Spleen (tissue), 13 donors: ENCODE measurements at regions of chr15 and their contacts with region 1.

Region 1: DNA sequence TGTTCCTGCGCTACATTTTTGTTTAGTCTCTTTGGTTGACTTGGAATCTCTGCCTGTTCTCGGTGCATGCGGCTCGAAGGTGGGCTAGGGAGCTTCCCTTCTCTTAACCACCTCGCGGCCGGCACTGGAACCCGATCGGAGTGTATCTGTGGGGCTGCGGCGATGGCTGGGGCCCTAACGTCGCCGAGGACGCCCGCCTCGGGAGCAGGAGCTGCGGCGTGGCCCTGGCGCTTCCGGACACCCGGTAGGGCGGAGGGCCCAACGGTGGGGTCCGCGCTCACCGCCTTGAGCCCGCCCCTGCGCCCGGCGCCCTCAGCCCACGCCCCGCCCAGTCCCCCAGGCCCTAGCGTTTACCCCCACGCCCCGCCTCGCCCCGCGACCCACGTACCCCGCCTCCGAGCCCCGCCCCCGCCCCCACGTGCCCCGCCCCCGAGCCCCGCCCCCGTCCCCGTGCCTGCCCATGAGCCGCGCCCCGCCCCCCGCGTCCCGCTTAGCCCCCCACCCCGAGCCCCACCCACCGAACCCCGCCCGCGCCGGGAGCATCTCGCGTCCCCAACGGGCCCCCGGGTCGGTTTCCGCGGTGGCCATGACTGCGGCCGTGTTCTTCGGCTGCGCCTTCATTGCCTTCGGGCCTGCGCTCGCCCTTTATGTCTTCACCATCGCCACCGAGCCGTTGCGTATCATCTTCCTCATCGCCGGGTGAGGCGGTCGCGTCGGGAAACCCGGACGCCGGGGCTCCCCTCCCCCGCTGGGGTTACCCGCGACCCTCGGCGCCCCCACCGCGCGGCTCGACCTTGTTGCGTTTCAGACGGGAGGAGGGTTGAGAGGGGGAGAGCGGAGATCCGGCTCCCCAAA is at the start of gene APH1B:
- DNase-seq: peak; percentile 96
- H3K4me3 ChIP-seq: peak within 1 kb of the TSS; percentile 47 to 93 (median 79)
- H3K27ac ChIP-seq: peak within 1 kb of the TSS; percentile 77 to 96 (median 92)
- H3K4me1 ChIP-seq: peaks cover 0 to 63% (median 28%) of the 10 kb centered on the region in 6 donors
- H3K27me3 ChIP-seq: no peaks in the 10 kb centered on the region
- CTCF ChIP-seq: peak in 1 of 11 experiments; percentile 12
- POLR2A ChIP-seq: peak in 1 of 3 donors; percentile 18
- total RNA-seq, gene APH1B: 27.2 to 51.5 (median 35.1) TPM

Region 2: GRCh38 chr15:63048115-63048775 is 229.0 kb before region 1 on chr15:
- intact Hi-C with region 1: loop called (anchors 10 kb)
- DNase-seq: peak; percentile 97
- H3K4me3 ChIP-seq: peak overlapping the region; percentile 84 to 99 (median 89)
- H3K27ac ChIP-seq: peak overlapping the region; percentile 53 to 90 (median 84)
- H3K4me1 ChIP-seq: peaks cover 16 to 72% (median 40%) of the 10 kb centered on the region in 6 donors
- H3K27me3 ChIP-seq: peaks cover 6 to 43% (median 36%) of the 10 kb centered on the region in 7 donors
- CTCF ChIP-seq: peak; percentile 75 to 96 (median 91)
- POLR2A ChIP-seq: peak in 2 of 3 donors; percentile 0 to 19

Region 3: DNA sequence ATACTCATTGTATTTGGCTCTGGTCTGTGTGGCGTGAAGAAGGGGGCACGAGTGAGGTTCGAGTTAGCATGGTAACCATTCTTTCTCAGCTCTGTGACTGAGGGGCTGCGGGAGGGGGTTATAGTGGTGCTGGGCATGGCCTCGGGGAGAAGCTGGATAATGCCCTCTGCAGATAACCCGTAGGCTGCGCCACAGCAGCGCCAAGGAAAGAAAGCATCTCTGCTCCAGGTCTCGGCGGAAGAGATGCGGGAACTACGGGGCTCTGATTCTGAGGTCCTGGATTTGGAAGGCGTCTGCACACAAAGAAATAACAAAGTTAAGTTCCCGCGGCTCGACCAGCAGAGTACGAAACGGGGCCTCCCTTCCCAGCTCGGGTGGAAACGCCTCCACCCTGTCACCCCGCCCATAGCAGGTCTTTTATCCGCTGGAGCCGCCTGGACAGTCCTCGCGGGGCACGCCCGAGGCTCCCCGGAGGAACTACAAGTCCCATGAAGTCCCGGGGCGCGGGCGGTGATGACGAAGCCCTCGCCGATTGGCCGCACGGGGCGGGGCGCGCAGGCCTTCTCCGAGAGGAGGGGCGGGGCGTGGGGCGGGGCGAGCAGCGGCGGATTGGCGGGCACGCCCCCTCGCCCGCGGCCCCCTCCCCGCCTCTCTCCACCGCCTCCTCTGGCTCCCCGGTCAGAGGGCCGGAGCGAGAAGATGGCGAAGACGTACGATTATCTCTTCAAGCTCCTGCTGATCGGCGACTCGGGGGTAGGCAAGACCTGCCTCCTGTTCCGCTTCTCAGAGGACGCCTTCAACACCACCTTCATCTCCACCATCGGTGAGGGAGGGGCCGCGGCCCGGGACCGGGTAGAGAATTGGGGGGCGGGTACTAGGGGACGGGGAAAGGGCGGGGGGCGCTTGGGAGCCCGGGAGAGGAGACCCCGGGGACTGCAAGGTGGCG is 88.1 kb before region 1 on chr15 and contains the start of gene RAB8B:
- intact Hi-C with region 1: loop called (anchors 10 kb)
- DNase-seq: peak; percentile 99
- H3K4me3 ChIP-seq: peak within 1 kb of the TSS; percentile 57 to 85 (median 62)
- H3K27ac ChIP-seq: peak within 1 kb of the TSS; percentile 76 to 97 (median 92)
- H3K4me1 ChIP-seq: peaks cover 29 to 51% (median 45%) of the 10 kb centered on the region in 6 donors
- H3K27me3 ChIP-seq: no peaks in the 10 kb centered on the region
- CTCF ChIP-seq: peak in 4 of 11 experiments; percentile 5 to 49 (median 30)
- POLR2A ChIP-seq: peak in 1 of 3 donors; percentile 78
- total RNA-seq, gene RAB8B: 63.4 to 96.4 (median 67.7) TPM

Region 4: GRCh38 chr15:63449731-63450130 is 172.5 kb after region 1 on chr15:
- intact Hi-C with region 1: no loop called
- DNase-seq: no peak
- H3K4me3 ChIP-seq: no peak overlapping the region
- H3K27ac ChIP-seq: peak overlapping the region in 4 of 8 donors; percentile 75 to 96 (median 84)
- H3K4me1 ChIP-seq: peaks cover 0 to 40% (median 5%) of the 10 kb centered on the region in 6 donors
- H3K27me3 ChIP-seq: no peaks in the 10 kb centered on the region
- CTCF ChIP-seq: no peak
- POLR2A ChIP-seq: no peak

Region 5: GRCh38 chr15:63504247-63504978 is 227.1 kb after region 1 on chr15 and contains the start of gene USP3:
- intact Hi-C with region 1: no loop called
- DNase-seq: peak; percentile 99
- H3K4me3 ChIP-seq: peak within 1 kb of the TSS; percentile 68 to 88 (median 80)
- H3K27ac ChIP-seq: peak within 1 kb of the TSS; percentile 97 to 100 (median 100)
- H3K4me1 ChIP-seq: peaks cover 63 to 88% (median 84%) of the 10 kb centered on the region in 6 donors
- H3K27me3 ChIP-seq: no peaks in the 10 kb centered on the region
- CTCF ChIP-seq: peak in 9 of 11 experiments; percentile 29 to 91 (median 72)
- POLR2A ChIP-seq: peak; percentile 28 to 89 (median 74)
- total RNA-seq, gene USP3: 82.0 to 136 (median 112) TPM